ENCODE measurements at regions of chr10 and their contacts with region 1.

Region 1: DNA sequence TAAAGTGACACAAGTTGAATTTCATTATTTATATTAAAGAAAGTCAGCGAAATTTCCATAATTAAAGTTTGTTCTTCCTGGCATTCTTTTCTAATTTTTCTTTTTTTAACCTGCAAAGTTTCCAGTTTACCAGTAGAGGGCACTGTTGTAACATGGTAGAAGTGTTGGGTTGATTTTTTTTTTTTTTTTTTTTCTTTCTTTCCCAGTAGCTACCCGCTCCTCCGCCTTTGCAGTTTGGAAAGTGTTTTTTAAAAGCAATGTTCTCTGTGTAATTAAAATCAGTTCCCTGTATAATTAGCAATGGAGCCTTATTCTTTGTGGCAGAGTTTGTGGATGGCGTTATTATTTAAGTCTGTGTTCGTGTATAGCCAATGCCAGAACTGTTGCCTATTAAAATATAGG is 53.7 kb downstream of the TAF3 start:
- DNase-seq: no peak
- H3K4me3 ChIP-seq: peak overlapping the region; percentile 54
- H3K27ac ChIP-seq: no peak overlapping the region
- H3K4me1 ChIP-seq: no peaks in the 10 kb centered on the region
- H3K27me3 ChIP-seq: no peaks in the 10 kb centered on the region
- CTCF ChIP-seq: peak; percentile 81

Region 2: GRCh38 chr10:9302120-9302746 is 1430.2 kb after region 1 on chr10:
- intact Hi-C with region 1: loop called (anchors 10 kb)
- DNase-seq: no peak
- H3K4me3 ChIP-seq: no peak overlapping the region
- H3K27ac ChIP-seq: no peak overlapping the region
- H3K4me1 ChIP-seq: no peaks in the 10 kb centered on the region
- H3K27me3 ChIP-seq: peaks cover 13% of the 10 kb centered on the region
- CTCF ChIP-seq: peak; percentile 50